ENCODE measurements at regions of chr16 and their contacts with region 1.

Region 1: DNA sequence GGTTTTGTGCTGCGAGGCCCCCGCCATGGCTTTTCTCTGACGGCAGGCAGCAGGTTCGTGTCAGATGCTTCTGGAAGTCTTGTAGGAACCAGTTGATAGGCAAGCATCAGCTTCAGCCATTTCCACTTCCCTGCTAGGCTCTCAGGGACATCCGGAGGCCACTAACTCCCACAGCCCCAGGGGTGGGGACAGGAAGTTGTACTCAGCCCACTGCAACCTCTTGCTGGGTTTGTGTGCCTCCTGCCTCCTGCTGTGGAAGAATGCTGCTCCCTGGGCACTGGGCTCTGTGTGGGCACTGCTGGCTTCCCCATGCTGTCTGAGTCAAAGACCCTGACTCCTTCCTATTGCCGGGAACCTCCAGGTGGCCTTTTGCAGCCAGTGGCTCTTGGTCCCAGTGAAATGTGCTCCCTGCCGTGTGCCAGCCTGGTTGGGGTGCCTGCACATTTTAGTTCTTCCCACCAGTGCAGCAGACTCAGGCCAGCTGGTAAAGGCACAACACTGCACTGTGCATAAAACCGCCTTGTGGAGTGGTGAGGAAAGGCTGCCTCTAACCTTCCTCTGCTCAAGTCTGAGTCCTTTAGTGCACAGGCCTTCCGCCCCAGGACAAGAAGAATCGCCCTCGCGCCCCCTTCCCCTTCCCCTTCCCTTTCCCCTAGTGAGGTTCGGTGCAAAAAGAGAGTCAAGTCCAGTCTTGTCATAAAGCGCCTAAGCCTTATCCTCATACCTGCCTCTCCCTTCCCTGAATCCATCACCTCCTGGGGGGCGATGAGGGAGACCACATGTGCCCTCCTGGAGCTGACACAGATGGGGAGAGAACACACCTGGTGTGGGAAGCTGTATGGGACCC is 16.6 kb downstream of the LDHD start:
- DNase-seq: peak in 1 of 3 donors; percentile 63
- ATAC-seq: peak; percentile 56
- H3K4me3 ChIP-seq: no peak overlapping the region
- H3K4me1 ChIP-seq: peaks cover 7% of the 10 kb centered on the region
- CTCF ChIP-seq: no peak

Region 2: DNA sequence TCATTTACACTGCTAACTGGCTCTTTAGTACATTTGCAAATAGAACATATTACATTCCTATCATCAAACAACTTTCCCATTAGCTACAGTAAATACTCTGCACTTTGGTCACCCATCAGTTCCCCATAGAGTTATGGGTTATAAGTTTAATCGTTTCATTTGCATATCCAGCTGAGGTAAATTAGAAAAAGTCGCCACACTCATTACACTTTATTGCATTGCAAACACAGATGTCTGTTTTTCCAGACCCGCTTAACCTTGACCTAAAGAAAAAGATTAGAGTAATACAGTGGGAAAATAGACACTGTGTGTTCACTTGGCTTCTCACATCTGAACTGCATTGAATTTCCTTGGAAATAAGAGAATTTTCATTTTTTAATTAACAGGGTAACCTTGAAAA is 1016.4 kb before region 1 on chr16:
- intact Hi-C with region 1: no loop called
- DNase-seq: no peak
- ATAC-seq: no peak
- H3K4me3 ChIP-seq: no peak overlapping the region
- H3K4me1 ChIP-seq: no peaks in the 10 kb centered on the region
- CTCF ChIP-seq: no peak

Region 3: GRCh38 chr16:75007443-75007842 is 92.5 kb before region 1 on chr16:
- intact Hi-C with region 1: loop called in 1 of 2 experiments (anchors 5 kb)
- DNase-seq: no peak
- ATAC-seq: no peak
- H3K4me3 ChIP-seq: no peak overlapping the region
- H3K4me1 ChIP-seq: no peaks in the 10 kb centered on the region
- CTCF ChIP-seq: no peak

Region 4: GRCh38 chr16:75218256-75219070 is 118.5 kb after region 1 on chr16 and contains the start of gene CTRB1:
- intact Hi-C with region 1: no loop called
- DNase-seq: no peak
- ATAC-seq: no peak
- H3K4me3 ChIP-seq: no peak within 1 kb of the TSS
- H3K4me1 ChIP-seq: no peaks in the 10 kb centered on the region
- CTCF ChIP-seq: no peak
- total RNA-seq, gene CTRB1: 0.67 to 0.76 TPM in 2 of 3 donors, not detected in the other

Region 5: GRCh38 chr16:75319513-75320411 is 219.8 kb after region 1 on chr16:
- intact Hi-C with region 1: no loop called
- DNase-seq: no peak
- ATAC-seq: no peak
- H3K4me3 ChIP-seq: no peak overlapping the region
- H3K4me1 ChIP-seq: peaks cover 5% of the 10 kb centered on the region
- CTCF ChIP-seq: no peak